GM18951 (cell line): ENCODE measurements at regions of chr7 and their contacts with region 1.

Region 1: GRCh38 chr7:47833211-47833610 is 115.1 kb downstream of the PKD1L1 start:
- POLR2A ChIP-seq: no peak

Region 2: DNA sequence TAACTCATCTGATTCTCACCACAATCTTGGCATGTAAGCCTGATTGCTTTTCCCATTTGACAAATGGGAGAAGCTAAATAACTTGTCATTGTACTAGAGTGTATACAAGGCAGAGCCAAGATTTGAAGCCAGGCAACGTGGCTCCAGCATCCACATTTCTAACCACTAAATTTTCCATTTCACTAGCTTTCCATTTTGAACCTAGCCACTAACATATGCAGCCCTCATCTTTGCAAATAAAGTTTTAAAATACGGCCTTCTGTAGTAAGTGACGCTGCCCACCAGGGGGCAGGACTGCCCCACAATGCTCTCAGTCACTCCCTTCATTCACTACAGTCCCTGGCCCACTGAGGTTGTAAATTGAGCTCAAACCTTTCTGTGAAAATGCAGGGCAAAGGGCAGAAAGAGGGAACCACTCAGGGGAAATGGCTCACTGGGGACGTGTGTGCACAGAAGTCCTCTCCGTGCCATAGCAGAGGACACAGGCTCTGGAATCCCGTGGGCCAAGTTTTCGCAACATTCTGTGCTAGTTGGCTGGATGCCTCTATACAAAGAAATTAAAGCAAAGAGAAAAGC is 567.0 kb before region 1 on chr7:
- in situ Hi-C with region 1: loop called (anchors 10 kb)
- POLR2A ChIP-seq: no peak